PC-3 (cell line): ENCODE measurements at regions of chr14 and their contacts with region 1.

Region 1: DNA sequence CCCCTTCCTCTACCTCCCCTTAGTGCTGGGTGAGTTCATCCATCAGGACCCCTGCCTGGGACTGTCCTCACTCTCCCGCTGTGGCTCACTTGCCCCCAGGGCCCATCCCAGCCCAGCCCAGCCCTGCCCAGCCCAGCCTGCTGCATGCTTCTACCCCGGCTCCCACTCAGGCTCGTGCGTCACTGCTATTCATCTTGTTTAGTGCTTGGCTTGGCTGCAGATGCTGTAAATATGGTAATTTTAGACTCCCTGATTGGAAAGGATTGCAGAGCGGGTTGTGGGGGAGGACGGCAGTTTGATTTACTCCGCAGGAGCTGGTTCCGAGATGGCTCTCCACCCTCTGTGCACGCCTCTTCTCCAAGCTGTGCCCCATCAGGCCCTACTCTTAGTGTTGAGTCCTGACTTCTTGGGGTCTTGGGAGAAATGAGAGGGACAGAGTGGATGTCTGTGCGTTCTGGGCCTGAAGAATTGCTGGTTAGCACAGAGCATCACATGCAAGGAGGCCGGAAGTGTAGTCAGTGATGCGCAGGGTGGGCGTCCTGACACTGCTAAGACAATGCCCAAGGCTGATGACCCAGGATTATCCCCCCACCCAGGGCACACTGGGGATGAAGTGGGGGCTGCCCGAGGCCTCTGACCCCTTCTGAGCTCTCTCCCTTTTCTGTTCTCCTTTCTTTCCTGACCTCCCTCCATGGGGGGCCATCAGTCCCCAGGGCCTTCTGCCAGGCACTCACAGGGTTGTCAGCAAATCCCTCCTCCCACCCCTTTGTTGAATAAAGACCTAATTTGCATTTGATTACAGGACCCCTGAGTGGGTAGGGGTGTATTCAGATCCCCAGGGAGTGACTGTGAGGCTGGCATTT is 244.4 kb downstream of the ZFP36L1 start:
- DNase-seq: peak; percentile 97
- ATAC-seq: peak; percentile 82
- H3K4me3 ChIP-seq: peak overlapping the region; percentile 13; the same call in 1 of the 2 replicates
- H3K27ac ChIP-seq: peak overlapping the region; percentile 98
- H3K4me1 ChIP-seq: peaks cover 47% of the 10 kb centered on the region
- H3K27me3 ChIP-seq: no peaks in the 10 kb centered on the region
- CTCF ChIP-seq: no peak

Region 2: DNA sequence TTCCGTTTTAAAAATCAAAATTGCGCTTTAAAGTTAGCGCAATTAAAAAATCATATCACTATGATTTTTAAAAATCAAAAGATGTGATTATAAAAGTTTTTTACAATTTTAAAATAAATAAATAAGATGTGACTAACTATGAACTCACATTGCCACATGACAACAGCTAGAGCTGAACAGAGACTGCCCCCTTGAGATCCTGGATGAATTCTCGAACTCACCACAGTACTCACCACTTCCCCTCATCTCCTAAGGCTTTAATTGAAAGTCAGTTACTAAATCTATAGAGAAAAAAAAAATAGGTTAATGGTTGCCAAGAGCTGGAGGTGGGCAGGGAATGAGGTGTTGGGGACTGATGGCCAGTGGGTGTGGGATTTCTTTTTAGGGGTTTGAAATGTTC is 139.7 kb before region 1 on chr14:
- CTCF ChIA-PET with region 1: interaction called, 3 read pairs
- POLR2A ChIA-PET with region 1: no interaction called
- intact Hi-C with region 1: loop called (anchors 1 kb)
- DNase-seq: peak; percentile 63
- ATAC-seq: peak; percentile 59
- H3K4me3 ChIP-seq: no peak overlapping the region
- H3K27ac ChIP-seq: peak overlapping the region; percentile 22; the same call in 1 of the 2 replicates
- H3K4me1 ChIP-seq: peaks cover 56% of the 10 kb centered on the region
- H3K27me3 ChIP-seq: no peaks in the 10 kb centered on the region
- CTCF ChIP-seq: peak; percentile 63

Region 3: GRCh38 chr14:68466491-68467032 is 81.9 kb before region 1 on chr14:
- CTCF ChIA-PET with region 1: no interaction called
- POLR2A ChIA-PET with region 1: interaction called, 6 read pairs
- intact Hi-C with region 1: loop called (anchors 5 kb)
- DNase-seq: peak; percentile 96
- ATAC-seq: peak; percentile 34
- H3K4me3 ChIP-seq: no peak overlapping the region; the same call in 1 of the 2 replicates
- H3K27ac ChIP-seq: peak overlapping the region; percentile 55
- H3K4me1 ChIP-seq: peaks cover 59% of the 10 kb centered on the region
- H3K27me3 ChIP-seq: no peaks in the 10 kb centered on the region
- CTCF ChIP-seq: no peak

Region 4: DNA sequence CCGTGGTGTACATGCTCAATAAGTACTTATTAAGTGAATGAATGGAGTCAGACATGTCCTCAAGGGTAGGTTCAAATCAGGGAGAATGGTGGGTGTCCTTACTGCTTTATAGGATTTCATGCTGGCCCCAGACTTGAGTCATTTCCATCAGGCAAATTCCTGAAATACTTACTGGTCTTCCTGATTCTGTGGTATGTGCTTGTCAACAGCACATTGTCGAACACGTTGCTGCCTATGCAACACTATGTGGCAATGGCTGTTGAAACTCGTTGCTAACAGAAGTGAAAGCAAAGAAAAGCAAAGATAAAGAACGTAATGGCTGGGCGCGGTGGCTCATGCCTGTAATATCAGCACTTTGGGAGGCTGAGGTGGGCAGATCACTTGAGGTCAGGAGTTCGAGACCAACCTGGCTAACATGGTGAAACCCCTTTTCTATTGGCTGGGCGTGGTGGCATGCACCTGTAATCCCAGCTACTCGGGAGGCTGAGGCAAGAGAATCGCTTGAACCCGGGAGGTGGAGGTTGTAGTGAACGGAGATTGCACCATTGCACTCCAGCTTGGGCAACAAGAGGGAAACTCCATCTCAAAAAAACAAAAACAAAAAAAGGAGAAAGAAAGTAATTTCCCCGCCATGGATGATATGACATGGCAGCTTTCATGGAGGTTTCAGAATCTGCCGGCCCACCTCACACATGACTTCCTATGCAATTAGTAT is 29.6 kb after region 1 on chr14:
- CTCF ChIA-PET with region 1: no interaction called
- POLR2A ChIA-PET with region 1: interaction called, 4 read pairs
- intact Hi-C with region 1: loop called (anchors 2 kb)
- DNase-seq: peak; percentile 91
- ATAC-seq: peak; percentile 91
- H3K4me3 ChIP-seq: no peak overlapping the region
- H3K27ac ChIP-seq: peak overlapping the region; percentile 37
- H3K4me1 ChIP-seq: peaks cover 29% of the 10 kb centered on the region
- H3K27me3 ChIP-seq: no peaks in the 10 kb centered on the region
- CTCF ChIP-seq: no peak

Region 5: DNA sequence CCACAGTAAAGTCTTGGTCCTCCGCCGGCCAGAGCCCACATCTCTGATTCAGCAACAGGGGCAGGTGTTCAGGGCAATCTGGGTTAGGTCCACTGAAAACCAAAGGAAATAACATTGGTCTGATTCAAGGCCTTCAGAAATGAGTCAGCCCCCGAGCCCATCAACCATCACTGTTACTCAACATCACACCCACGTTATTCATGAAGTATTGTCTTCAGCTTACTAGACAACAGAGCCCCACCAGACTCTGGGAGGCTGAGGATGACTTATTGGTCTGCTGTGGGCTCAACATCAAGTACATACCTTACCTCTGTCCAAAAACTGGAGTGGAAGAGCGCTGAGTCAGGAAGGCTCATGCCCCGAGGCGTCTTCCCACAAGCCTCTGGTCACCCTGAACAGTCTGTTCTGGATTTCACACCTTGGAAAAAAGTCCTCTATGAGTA is 146.9 kb after region 1 on chr14:
- CTCF ChIA-PET with region 1: no interaction called
- POLR2A ChIA-PET with region 1: no interaction called
- intact Hi-C with region 1: loop called (anchors 2 kb)
- DNase-seq: peak; percentile 99
- ATAC-seq: peak; percentile 95
- H3K4me3 ChIP-seq: no peak overlapping the region
- H3K27ac ChIP-seq: peak overlapping the region; percentile 90
- H3K4me1 ChIP-seq: peaks cover 28% of the 10 kb centered on the region
- H3K27me3 ChIP-seq: no peaks in the 10 kb centered on the region
- CTCF ChIP-seq: no peak